ENCODE measurements at regions of chr12 and their contacts with region 1.

Region 1: DNA sequence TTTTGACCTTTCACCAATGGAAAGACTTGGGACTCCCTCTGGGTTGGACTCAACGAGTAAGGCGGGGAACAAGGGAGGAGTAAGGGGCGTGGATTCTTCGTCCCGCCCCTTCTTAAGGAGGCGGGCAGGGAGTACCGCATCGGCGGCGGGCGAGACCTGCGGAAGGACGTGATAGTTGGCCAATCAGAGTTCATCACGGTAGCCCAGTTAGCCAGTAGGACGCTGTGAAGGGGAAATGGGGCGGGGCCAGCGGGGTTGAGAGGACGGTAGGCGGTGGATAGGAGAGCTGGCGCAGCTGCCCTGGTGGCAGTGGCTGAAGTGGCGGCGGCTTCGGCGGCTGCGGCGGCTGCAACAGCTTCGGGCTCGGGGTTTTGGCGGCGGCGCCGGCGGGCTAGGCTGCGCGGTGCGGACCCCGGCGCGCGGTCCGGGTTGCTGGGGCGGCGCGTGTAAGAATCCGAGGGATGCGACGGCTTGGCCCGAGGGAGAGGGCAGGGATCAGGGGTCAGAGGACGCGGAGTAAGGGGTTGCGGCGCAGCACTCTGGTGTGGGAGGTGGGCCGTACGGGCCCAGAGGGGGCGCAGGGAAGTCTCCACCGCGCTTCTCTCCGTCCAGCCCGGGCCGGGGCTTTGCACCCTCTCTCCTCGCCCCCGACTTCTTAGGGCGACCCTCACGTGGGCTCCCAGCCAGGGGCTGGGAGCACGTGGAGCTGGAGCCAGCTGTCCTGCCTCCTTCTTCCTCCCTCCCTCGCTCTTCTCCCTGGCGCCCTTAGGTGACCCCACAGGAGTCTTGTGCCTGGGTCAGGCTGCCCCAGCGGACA is at the start of gene TPCN1:
- DNase-seq: peak; percentile 96 to 100 (median 99)
- H3K4me3 ChIP-seq: peak within 1 kb of the TSS; percentile 66 to 99 (median 92)
- H3K27ac ChIP-seq: peak within 1 kb of the TSS in 58 of 59 donors; percentile 25 to 94 (median 86)
- H3K27me3 ChIP-seq: no peaks in the 10 kb centered on the region
- CTCF ChIP-seq: peak in 29 of 56 donors; percentile 3 to 57 (median 33)
- total RNA-seq, gene TPCN1: 45.9 to 150 (median 76.0) TPM

Region 2: GRCh38 chr12:112686373-112686772 is 535.0 kb before region 1 on chr12:
- intact Hi-C with region 1: no loop called
- DNase-seq: peak in 9 of 10 donors; percentile 27 to 74 (median 56)
- H3K4me3 ChIP-seq: no peak overlapping the region
- H3K27ac ChIP-seq: peak overlapping the region in 34 of 59 donors; percentile 6 to 83 (median 50)
- H3K27me3 ChIP-seq: peaks cover 0 to 7% (median 0%) of the 10 kb centered on the region in 45 donors
- CTCF ChIP-seq: no peak

Region 3: DNA sequence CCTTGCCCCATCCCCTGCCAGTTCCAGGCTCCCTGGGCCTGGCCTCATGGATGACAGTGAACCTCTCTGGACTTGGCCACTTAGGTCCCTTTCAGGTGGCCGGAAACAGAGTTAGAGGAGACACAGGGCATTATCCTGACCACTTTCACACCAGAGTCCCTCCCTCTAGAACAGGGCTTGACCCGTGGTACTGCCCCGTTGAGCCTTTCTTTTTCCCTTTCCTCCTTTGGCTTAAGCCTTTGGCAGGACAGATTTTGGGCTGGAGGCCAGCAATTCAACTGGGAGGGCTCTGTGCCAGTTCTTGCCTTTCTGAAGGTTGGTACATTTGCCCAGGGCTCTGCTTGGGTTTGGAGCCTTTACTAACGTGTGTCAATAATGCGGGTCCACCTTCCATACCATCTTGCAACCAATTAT is 22.7 kb after region 1 on chr12:
- intact Hi-C with region 1: loop called in 1 of 2 experiments (anchors 2 kb)
- DNase-seq: peak; percentile 67 to 94 (median 78)
- H3K4me3 ChIP-seq: peak overlapping the region in 56 of 59 donors; percentile 4 to 64 (median 40)
- H3K27ac ChIP-seq: peak overlapping the region; percentile 21 to 95 (median 86)
- H3K27me3 ChIP-seq: no peaks in the 10 kb centered on the region
- CTCF ChIP-seq: peak in 1 of 56 donors; percentile 13

Region 4: GRCh38 chr12:113261847-113262470 is 40.6 kb after region 1 on chr12:
- intact Hi-C with region 1: loop called in 1 of 2 experiments (anchors 1 kb)
- DNase-seq: peak in 1 of 10 donors; percentile 13
- H3K4me3 ChIP-seq: no peak overlapping the region
- H3K27ac ChIP-seq: peak overlapping the region in 31 of 59 donors; percentile 4 to 98 (median 90)
- H3K27me3 ChIP-seq: no peaks in the 10 kb centered on the region
- CTCF ChIP-seq: no peak

Region 5: GRCh38 chr12:113271853-113272561 is 50.6 kb after region 1 on chr12:
- intact Hi-C with region 1: loop called in 1 of 2 experiments (anchors 5 kb)
- DNase-seq: peak in 9 of 10 donors; percentile 38 to 83 (median 67)
- H3K4me3 ChIP-seq: peak overlapping the region in 27 of 59 donors; percentile 0 to 33 (median 21)
- H3K27ac ChIP-seq: peak overlapping the region; percentile 41 to 91 (median 83)
- H3K27me3 ChIP-seq: no peaks in the 10 kb centered on the region
- CTCF ChIP-seq: no peak

Region 6: GRCh38 chr12:113292091-113292490 is 70.7 kb after region 1 on chr12:
- intact Hi-C with region 1: no loop called
- DNase-seq: no peak
- H3K4me3 ChIP-seq: no peak overlapping the region
- H3K27ac ChIP-seq: peak overlapping the region in 22 of 59 donors; percentile 2 to 69 (median 30)
- H3K27me3 ChIP-seq: no peaks in the 10 kb centered on the region
- CTCF ChIP-seq: no peak

Measured in dorsolateral prefrontal cortex (tissue), 120 donors.